A549 (cell line): ENCODE measurements at regions of chr9 and their contacts with region 1.

Region 1: DNA sequence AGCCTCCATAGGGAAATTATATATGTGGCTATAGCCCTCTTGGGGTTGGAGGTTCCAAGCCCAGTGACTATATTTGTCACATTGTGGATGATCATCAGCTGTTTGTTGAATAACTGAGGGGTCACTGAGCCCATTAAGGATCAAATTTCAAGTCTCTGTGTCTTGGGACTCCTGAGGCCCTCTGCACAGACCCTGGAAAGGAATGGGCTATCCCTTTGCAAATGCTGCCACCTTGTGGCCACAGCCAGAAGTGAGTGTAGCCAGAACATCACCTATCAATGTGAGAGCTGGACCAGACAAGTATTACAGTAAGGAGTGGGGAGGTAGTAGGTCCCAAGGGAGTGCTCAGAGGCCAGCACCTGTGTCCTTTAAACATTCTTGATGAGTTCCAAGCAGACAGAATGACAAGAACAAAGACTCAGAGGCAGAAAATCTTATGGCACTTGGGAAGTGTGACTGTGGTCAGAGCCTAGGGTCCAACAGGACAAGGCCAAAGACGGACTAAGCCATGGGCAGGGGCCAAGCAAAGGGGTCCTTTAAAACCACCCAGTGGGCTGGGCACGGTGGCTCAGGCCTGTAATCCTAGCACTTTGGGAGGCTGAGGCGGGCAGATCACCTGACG is 8.2 kb downstream of the RPP25L start:
- DNase-seq: peak; percentile 71 to 94
- ATAC-seq: peak; percentile 82 to 96
- H3K4me3 ChIP-seq: no peak overlapping the region
- H3K27ac ChIP-seq: no peak overlapping the region
- H3K4me1 ChIP-seq: peaks cover 5% of the 10 kb centered on the region; the same call in 1 of the 3 replicates
- CTCF ChIP-seq: peak; percentile 95
- EP300 ChIP-seq: no peak
- POLR2A ChIP-seq: no peak
- RAD21 ChIP-seq: peak; percentile 88 to 96

Region 2: GRCh38 chr9:34337404-34337803 is 266.3 kb before region 1 on chr9:
- CTCF ChIA-PET with region 1: interaction called, 15 read pairs
- POLR2A ChIA-PET with region 1: no interaction called
- DNase-seq: peak in 1 of 2 experiments; percentile 16
- ATAC-seq: no peak
- H3K4me3 ChIP-seq: no peak overlapping the region
- H3K27ac ChIP-seq: no peak overlapping the region
- H3K4me1 ChIP-seq: peaks cover 4% of the 10 kb centered on the region; the same call in 2 of the 3 replicates
- CTCF ChIP-seq: no peak
- EP300 ChIP-seq: no peak
- POLR2A ChIP-seq: no peak
- RAD21 ChIP-seq: peak; percentile 11 to 39; a peak in 2 of 5 replicates

Region 3: GRCh38 chr9:34437006-34437925 is 166.5 kb before region 1 on chr9:
- CTCF ChIA-PET with region 1: interaction called, 152 read pairs
- POLR2A ChIA-PET with region 1: no interaction called
- DNase-seq: peak; percentile 51 to 87
- ATAC-seq: peak; percentile 95 to 98
- H3K4me3 ChIP-seq: no peak overlapping the region
- H3K27ac ChIP-seq: no peak overlapping the region
- H3K4me1 ChIP-seq: no peaks in the 10 kb centered on the region
- CTCF ChIP-seq: peak; percentile 87
- EP300 ChIP-seq: no peak
- POLR2A ChIP-seq: no peak
- RAD21 ChIP-seq: peak; percentile 86 to 92

Region 4: GRCh38 chr9:34546834-34547827 is 56.6 kb before region 1 on chr9:
- CTCF ChIA-PET with region 1: interaction called, 297 read pairs
- POLR2A ChIA-PET with region 1: no interaction called
- DNase-seq: peak; percentile 66 to 78
- ATAC-seq: peak; percentile 83 to 91
- H3K4me3 ChIP-seq: no peak overlapping the region
- H3K27ac ChIP-seq: no peak overlapping the region
- H3K4me1 ChIP-seq: peaks cover 9% of the 10 kb centered on the region; the same call in 1 of the 3 replicates
- CTCF ChIP-seq: peak; percentile 65
- EP300 ChIP-seq: no peak
- POLR2A ChIP-seq: no peak
- RAD21 ChIP-seq: peak; percentile 61 to 72

Region 5: GRCh38 chr9:34578241-34579103 is 25.2 kb before region 1 on chr9:
- CTCF ChIA-PET with region 1: interaction called, 25 read pairs
- POLR2A ChIA-PET with region 1: no interaction called
- DNase-seq: no peak
- ATAC-seq: no peak; a peak in 1 of 6 replicates
- H3K4me3 ChIP-seq: no peak overlapping the region
- H3K27ac ChIP-seq: no peak overlapping the region
- H3K4me1 ChIP-seq: no peaks in the 10 kb centered on the region
- CTCF ChIP-seq: no peak
- EP300 ChIP-seq: no peak
- POLR2A ChIP-seq: no peak
- RAD21 ChIP-seq: no peak

Region 6: GRCh38 chr9:34637356-34638137 is 33.8 kb after region 1 on chr9 and contains the start of gene SIGMAR1:
- CTCF ChIA-PET with region 1: interaction called, 429 read pairs
- POLR2A ChIA-PET with region 1: no interaction called
- DNase-seq: peak; percentile 87 to 93
- ATAC-seq: peak; percentile 87 to 92
- H3K4me3 ChIP-seq: peak within 1 kb of the TSS; percentile 73
- H3K27ac ChIP-seq: peak within 1 kb of the TSS; percentile 88 to 95
- H3K4me1 ChIP-seq: peaks cover 26% of the 10 kb centered on the region; the same call in 2 of the 3 replicates
- CTCF ChIP-seq: no peak
- EP300 ChIP-seq: no peak
- POLR2A ChIP-seq: peak; percentile 89
- RAD21 ChIP-seq: no peak
- polyA plus RNA-seq, gene SIGMAR1: 64.6 and 95.4 TPM in 2 replicates